CD8-positive, alpha-beta T cell (primary cell): ENCODE measurements at regions of chr3 and their contacts with region 1.

Region 1: DNA sequence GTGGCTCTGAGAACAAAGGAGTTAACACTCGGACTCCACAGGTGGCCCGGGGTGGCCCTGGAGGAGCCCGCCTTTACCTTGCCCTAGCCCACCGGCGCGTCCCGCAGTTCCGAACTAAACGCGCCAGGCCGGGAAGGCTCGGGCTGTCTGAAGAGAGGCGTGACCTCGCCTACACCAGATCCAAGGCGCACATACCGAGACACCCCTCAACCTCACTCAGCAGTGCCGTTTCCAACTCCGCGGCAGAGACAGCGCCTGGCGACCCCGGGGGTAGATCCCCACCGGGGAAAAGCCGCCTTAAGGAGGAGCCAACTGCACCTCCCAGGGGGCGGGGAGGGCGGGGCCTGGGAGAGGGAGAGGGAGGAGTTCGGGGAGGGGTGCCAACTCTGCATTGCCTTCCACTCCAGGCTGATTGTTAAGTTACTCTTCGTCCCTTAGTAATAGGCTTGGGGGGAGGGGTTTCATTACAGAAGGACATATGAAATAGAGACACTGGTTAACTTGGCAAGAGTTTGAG is at the start of gene DLG1:
- DNase-seq: peak; percentile 52 to 88 (median 77)
- ATAC-seq: peak; percentile 62
- H3K4me3 ChIP-seq: peak within 1 kb of the TSS; percentile 95 to 97
- H3K4me3 Mint-ChIP-seq: peak within 1 kb of the TSS; percentile 91
- H3K27ac ChIP-seq: peak within 1 kb of the TSS; percentile 62 to 76
- H3K27ac Mint-ChIP-seq: peak within 1 kb of the TSS; percentile 94
- H3K4me1 ChIP-seq: peaks cover 16% of the 10 kb centered on the region
- H3K4me1 Mint-ChIP-seq: peaks cover 43% of the 10 kb centered on the region
- H3K27me3 ChIP-seq: no peaks in the 10 kb centered on the region
- H3K27me3 Mint-ChIP-seq: peaks cover 2% of the 10 kb centered on the region
- CTCF ChIP-seq: no peak
- total RNA-seq, gene DLG1: 70.9 to 72.9 TPM

Region 2: GRCh38 chr3:197456261-197457091 is 158.1 kb after region 1 on chr3:
- CTCF ChIA-PET with region 1: no interaction called
- POLR2A ChIA-PET with region 1: no interaction called
- intact Hi-C with region 1: loop called in 1 of 2 experiments (anchors 10 kb)
- DNase-seq: peak in 8 of 9 experiments; percentile 22 to 70 (median 36)
- ATAC-seq: peak; percentile 35
- H3K4me3 ChIP-seq: peak overlapping the region; percentile 72 to 83
- H3K4me3 Mint-ChIP-seq: peak overlapping the region; percentile 95
- H3K27ac ChIP-seq: peak overlapping the region in 1 of 2 experiments; percentile 43
- H3K27ac Mint-ChIP-seq: peak overlapping the region; percentile 87
- H3K4me1 ChIP-seq: peaks cover 9% of the 10 kb centered on the region
- H3K4me1 Mint-ChIP-seq: peaks cover 29% of the 10 kb centered on the region
- H3K27me3 ChIP-seq: peaks cover 0 to 3% of the 10 kb centered on the region in 2 experiments
- H3K27me3 Mint-ChIP-seq: peaks cover 3% of the 10 kb centered on the region
- CTCF ChIP-seq: no peak

Region 3: DNA sequence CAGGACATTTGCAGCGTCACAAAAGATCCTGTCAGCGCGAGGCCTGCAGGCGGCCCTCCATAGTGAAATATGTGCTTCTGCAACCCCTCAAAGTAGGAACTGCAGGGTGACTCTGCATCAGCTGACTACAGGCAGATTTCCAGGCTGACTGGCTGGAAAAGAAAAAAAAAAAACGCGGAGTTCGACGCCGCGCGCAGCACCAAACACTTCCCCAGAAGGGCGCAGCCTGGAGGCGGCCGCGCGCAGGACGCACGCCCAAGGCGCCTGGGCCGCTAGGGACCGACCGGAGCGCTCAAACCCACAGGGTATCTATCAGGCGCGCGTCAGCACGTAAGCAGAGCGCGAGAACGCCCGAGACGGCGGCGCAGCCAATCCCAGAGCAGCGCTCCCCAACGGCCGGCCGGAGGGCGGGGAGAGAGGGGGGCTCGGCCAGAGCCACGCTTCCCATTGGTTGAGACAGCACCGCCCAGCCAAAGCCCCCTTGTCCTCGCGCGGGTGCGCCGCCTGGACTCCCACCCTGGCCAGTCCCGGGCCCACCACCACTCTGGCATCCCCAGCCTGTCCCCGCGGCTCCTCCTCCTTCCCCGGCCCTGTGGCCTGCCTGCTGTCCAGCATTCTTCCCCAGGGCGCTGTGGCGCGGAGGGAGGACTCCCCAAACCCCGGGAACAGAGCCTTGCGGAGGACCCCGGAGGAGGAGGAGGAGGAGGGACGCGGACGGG is 256.3 kb after region 1 on chr3:
- CTCF ChIA-PET with region 1: no interaction called
- POLR2A ChIA-PET with region 1: no interaction called
- intact Hi-C with region 1: loop called (anchors 1 to 2 kb)
- DNase-seq: peak; percentile 80 to 96 (median 89)
- ATAC-seq: peak; percentile 95
- H3K4me3 ChIP-seq: peak overlapping the region; percentile 92 to 95
- H3K4me3 Mint-ChIP-seq: peak overlapping the region; percentile 91
- H3K27ac ChIP-seq: peak overlapping the region; percentile 86 to 88
- H3K27ac Mint-ChIP-seq: peak overlapping the region; percentile 93
- H3K4me1 ChIP-seq: peaks cover 6% of the 10 kb centered on the region
- H3K4me1 Mint-ChIP-seq: peaks cover 21% of the 10 kb centered on the region
- H3K27me3 ChIP-seq: no peaks in the 10 kb centered on the region
- H3K27me3 Mint-ChIP-seq: peaks cover 8% of the 10 kb centered on the region
- CTCF ChIP-seq: peak; percentile 48